HCT116 (cell line): ENCODE measurements at regions of chr2 and their contacts with region 1.

Region 1: GRCh38 chr2:129849559-129850160 is 129.8 kb upstream of the RAB6C start:
- DNase-seq: peak; percentile 74
- ATAC-seq: peak; percentile 78
- H3K4me3 ChIP-seq: no peak overlapping the region
- H3K27ac ChIP-seq: no peak overlapping the region
- H3K4me1 ChIP-seq: no peaks in the 10 kb centered on the region
- H3K27me3 ChIP-seq: peaks cover 10% of the 10 kb centered on the region
- CTCF ChIP-seq: peak; percentile 40 to 74 (median 52); a peak in 5 of 6 replicates
- POLR2A ChIP-seq: no peak
- RAD21 ChIP-seq: peak; percentile 74

Region 2: DNA sequence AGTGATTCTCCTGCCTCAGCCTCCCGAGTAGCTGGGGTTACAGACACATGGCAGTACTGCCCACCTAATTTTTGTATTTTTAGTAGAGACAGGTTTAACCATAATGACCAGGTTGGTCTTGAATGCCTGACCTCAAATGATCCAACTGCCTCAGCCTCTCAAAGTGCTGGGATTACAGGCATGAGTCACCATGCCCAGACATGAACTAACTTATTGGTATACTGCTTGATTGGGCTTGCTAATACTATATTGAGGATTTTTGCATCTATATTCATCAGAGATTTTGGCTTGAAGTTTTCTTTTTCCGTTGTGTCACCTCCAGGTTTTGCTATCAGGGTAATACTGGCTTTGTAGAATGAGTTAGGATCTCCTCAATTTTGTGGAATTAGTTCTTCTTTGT is 824.9 kb before region 1 on chr2:
- CTCF ChIA-PET with region 1: no interaction called
- POLR2A ChIA-PET with region 1: no interaction called
- RAD21 ChIA-PET with region 1: no interaction called
- intact Hi-C with region 1: no loop called
- DNase-seq: no peak
- ATAC-seq: no peak
- H3K4me3 ChIP-seq: no peak overlapping the region
- H3K27ac ChIP-seq: no peak overlapping the region
- H3K4me1 ChIP-seq: no peaks in the 10 kb centered on the region
- H3K27me3 ChIP-seq: no peaks in the 10 kb centered on the region
- CTCF ChIP-seq: no peak
- POLR2A ChIP-seq: no peak
- RAD21 ChIP-seq: no peak

Region 3: DNA sequence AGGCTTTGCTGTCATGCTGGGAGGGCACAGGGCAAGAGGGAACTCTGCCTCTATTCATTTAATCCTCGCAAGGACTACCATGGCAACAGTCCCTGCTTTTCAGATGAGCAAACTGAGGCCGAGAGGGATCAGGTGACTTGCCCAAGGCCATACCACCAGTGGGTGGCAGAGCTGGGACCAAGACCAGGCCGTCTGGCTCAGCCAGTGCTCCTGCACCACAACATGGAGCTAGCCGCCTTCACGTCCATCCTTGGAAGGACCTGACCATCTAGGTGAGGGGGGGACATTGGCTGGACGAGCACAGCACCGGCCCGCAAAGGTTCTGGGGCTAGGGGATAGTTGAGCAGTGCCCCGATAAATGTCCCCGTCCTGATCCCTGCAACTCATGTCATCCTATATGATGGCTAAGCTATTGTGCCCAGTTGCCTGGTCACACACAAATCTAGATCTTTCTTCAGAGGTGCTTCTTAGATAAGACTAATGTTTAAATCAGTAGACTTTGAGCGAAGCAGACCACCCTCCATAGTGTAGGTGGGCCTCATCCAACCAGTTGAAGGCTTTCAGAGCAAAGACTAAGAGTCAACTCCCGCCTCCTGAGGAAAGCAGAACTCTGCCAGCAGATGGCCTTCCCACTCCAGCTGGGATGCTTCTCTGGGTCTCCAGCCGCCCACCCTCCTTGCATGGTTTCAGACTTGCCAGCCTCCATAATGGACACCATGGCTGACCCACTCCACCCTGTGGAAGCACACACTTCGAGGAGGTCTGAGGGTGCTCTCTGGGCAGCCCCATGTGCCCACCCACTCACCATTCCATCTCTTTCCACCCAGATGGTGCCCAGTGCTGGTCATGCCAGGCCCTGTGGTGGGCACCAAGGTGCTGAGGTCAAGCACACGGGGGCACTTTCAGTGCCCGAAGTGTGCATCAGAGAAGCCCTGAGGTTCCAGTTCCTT is 85.0 kb before region 1 on chr2:
- CTCF ChIA-PET with region 1: no interaction called
- POLR2A ChIA-PET with region 1: no interaction called
- RAD21 ChIA-PET with region 1: no interaction called
- intact Hi-C with region 1: loop called (anchors 1 kb)
- DNase-seq: peak; percentile 8
- ATAC-seq: peak; percentile 88
- H3K4me3 ChIP-seq: no peak overlapping the region
- H3K27ac ChIP-seq: no peak overlapping the region
- H3K4me1 ChIP-seq: no peaks in the 10 kb centered on the region
- H3K27me3 ChIP-seq: peaks cover 24% of the 10 kb centered on the region
- CTCF ChIP-seq: peak; percentile 14 to 55 (median 45); a peak in 5 of 6 replicates
- POLR2A ChIP-seq: no peak
- RAD21 ChIP-seq: peak; percentile 27; the same call in 1 of the 2 replicates